ENCODE measurements at regions of chrX and their contacts with region 1.

Region 1: DNA sequence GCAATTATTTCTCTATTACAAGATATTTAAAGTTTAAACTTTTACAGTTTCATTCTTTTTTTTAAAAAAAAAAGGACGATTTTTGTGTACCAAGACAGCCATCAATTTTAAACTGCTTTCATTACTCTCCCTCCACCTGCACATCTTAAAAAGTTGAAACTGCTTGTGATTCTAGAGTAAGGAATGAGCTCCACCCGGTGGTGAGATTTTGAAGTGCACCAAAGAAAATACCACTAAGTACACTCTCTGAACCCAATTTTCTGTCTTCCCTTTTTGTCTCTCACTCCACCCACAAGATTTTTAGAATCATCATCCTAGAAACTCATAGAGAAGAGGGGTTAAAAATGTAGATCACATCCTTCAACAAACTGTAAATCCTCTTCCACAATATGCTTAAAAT is 91.3 kb upstream of the WDR44 start:
- DNase-seq: peak in 1 of 2 donors; percentile 23
- ATAC-seq: no peak
- H3K4me3 ChIP-seq: no peak overlapping the region
- H3K27ac ChIP-seq: no peak overlapping the region
- H3K4me1 ChIP-seq: no peaks in the 10 kb centered on the region
- H3K27me3 ChIP-seq: peaks cover 0 to 6% (median 0%) of the 10 kb centered on the region in 7 donors
- CTCF ChIP-seq: peak; percentile 27 to 76 (median 62)

Region 2: DNA sequence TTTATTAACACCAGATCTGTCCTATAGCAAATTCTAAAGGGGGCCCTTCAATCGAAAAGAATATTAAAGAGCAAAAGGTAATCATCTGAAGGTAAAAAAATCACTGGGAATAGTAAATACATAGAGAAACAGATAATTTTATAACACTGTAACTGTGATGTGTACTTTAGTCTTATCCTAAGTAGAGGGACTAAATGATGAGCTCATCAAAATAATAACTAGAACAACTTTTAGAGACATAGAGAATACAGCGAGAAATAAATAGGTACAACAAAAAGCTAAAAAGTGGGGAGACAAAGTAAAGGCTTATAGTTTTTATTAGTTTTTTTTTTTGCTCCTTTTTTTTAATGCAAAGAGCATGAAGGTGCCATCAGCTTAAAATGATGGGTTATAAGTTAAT is 1774.6 kb before region 1 on chrX:
- intact Hi-C with region 1: loop called in 1 of 10 experiments (anchors 10 kb)
- DNase-seq: no peak
- ATAC-seq: no peak
- H3K4me3 ChIP-seq: no peak overlapping the region
- H3K27ac ChIP-seq: no peak overlapping the region
- H3K4me1 ChIP-seq: no peaks in the 10 kb centered on the region
- H3K27me3 ChIP-seq: no peaks in the 10 kb centered on the region
- CTCF ChIP-seq: no peak

Region 3: DNA sequence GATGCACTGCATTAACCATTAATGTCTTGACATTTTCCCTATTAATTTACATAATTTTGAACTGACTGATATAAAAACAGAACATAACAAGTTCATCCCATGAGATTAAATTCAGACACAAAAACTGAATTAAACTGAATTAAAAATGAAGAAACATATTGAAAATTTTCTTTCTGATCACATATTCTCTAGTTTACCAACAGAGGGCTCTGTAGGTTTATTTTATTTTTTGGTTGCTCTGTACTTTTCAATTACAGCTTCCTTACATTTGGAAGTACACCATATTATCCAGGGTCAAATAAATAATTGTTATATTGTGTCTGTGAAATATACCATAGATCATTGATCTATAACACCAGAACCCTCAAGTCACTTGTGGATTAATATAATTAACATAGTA is 1764.5 kb before region 1 on chrX:
- intact Hi-C with region 1: loop called in 3 of 10 experiments (anchors 10 kb)
- DNase-seq: no peak
- ATAC-seq: no peak
- H3K4me3 ChIP-seq: no peak overlapping the region
- H3K27ac ChIP-seq: no peak overlapping the region
- H3K4me1 ChIP-seq: no peaks in the 10 kb centered on the region
- H3K27me3 ChIP-seq: no peaks in the 10 kb centered on the region
- CTCF ChIP-seq: peak in 5 of 9 donors; percentile 12 to 36 (median 30)

Measured in heart right ventricle (tissue), 16 donors.